Dendritic cell treated with granulocyte-macrophage colony-stimulating factor and Interleukin-4, amounts not matched to agents 40 ng/mL and 50 ng/mL, for 4 days (primary cell): ENCODE measurements at regions of chr6 and their contacts with region 1.

Region 1: DNA sequence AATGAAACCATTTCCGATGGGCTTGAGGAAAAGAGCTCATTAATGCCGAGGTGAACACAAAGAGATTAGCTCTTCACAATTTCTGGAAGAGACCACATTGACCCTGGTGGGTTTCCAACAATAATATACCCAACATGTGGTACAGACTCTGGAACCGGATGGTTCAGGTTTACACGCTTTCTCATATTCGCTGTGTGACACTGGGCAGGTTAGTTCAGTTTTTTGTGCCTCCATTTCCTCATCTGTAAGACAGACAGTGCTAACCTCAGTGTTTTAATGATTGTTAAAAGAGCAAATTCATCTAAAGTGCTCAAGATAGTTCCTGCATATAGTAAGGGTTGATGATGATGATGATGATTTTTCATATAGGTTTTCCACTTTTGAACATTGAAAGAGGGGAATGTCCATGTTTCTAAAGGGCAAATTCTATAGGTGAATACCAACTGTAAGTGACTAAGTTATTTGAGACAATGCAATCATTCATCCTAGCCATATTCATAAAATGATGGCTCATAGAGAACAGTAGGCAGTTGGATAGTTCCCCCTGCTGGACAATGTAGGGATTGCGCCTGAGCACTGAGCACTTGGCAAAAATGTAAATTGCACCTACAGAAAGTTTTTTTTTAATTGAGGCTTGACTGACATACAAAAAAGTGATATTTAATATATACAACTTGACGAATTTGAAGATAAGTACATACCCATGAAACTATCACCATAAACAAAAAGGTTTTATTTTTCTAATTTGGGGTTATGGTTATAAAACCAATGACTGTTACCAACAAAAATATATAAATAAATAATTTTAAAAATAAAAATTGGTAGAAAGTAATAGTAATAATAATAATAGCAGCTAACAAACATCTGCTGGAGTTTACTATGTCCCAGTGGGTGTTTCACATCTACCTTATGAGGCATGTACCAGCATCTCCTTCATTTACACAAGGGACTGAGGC is 2.1 kb upstream of the PERP start:
- H3K4me3 Mint-ChIP-seq: no peak overlapping the region
- H3K27ac Mint-ChIP-seq: no peak overlapping the region
- H3K4me1 Mint-ChIP-seq: peaks cover 16% of the 10 kb centered on the region
- H3K27me3 Mint-ChIP-seq: peaks cover 53% of the 10 kb centered on the region

Region 2: GRCh38 chr6:137283940-137284810 is 825.1 kb before region 1 on chr6:
- intact Hi-C with region 1: no loop called
- H3K4me3 Mint-ChIP-seq: no peak overlapping the region
- H3K27ac Mint-ChIP-seq: no peak overlapping the region
- H3K4me1 Mint-ChIP-seq: peaks cover 52% of the 10 kb centered on the region
- H3K27me3 Mint-ChIP-seq: peaks cover 5% of the 10 kb centered on the region

Region 3: DNA sequence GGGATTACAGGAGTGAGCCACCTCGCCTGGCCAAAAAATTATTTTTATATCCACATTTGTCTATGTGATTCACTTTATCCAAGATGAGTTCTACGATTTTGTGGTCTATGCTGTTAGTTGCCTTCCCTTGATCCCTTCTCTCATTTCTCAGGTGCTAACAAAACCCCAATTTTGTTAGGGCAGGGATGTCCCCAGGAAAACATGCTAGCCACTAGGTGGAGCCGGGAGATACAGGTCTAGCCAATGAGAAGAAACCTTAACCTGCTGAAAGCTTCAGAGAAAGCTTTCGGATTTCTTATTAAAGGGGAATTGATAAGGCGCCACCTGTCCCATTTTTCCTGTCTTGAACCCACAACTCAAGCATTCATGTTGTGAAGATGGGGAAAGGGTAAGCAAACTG is 447.7 kb before region 1 on chr6:
- intact Hi-C with region 1: loop called (anchors 5 kb)
- H3K4me3 Mint-ChIP-seq: no peak overlapping the region
- H3K27ac Mint-ChIP-seq: no peak overlapping the region
- H3K4me1 Mint-ChIP-seq: no peaks in the 10 kb centered on the region
- H3K27me3 Mint-ChIP-seq: no peaks in the 10 kb centered on the region

Region 4: GRCh38 chr6:137780447-137781034 is 328.8 kb before region 1 on chr6:
- intact Hi-C with region 1: no loop called
- H3K4me3 Mint-ChIP-seq: no peak overlapping the region
- H3K27ac Mint-ChIP-seq: peak overlapping the region; percentile 1
- H3K4me1 Mint-ChIP-seq: peaks cover 21% of the 10 kb centered on the region
- H3K27me3 Mint-ChIP-seq: peaks cover 26% of the 10 kb centered on the region

Region 5: DNA sequence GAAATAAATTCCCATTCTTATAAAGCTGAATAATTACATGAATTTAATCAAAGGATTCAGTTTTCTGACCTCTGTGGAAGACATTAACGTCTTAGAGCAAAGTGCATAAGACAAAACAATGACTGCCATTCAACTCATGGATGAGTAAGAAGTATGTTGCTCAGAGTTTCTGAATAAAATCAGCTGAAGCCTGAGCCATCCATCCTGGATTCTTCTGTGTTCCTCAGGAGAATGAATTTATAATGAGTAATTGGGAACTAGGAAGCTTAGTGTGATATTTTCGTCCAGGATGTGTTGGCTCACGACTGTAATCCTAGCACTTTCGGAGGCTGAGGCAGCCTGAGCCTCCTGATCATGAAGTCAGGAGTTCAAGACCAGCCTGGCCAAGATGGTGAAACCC is 64.9 kb before region 1 on chr6:
- intact Hi-C with region 1: no loop called
- H3K4me3 Mint-ChIP-seq: no peak overlapping the region
- H3K27ac Mint-ChIP-seq: no peak overlapping the region
- H3K4me1 Mint-ChIP-seq: no peaks in the 10 kb centered on the region
- H3K27me3 Mint-ChIP-seq: no peaks in the 10 kb centered on the region